PC-9 (cell line): ENCODE measurements at regions of chr5 and their contacts with region 1.

Region 1: DNA sequence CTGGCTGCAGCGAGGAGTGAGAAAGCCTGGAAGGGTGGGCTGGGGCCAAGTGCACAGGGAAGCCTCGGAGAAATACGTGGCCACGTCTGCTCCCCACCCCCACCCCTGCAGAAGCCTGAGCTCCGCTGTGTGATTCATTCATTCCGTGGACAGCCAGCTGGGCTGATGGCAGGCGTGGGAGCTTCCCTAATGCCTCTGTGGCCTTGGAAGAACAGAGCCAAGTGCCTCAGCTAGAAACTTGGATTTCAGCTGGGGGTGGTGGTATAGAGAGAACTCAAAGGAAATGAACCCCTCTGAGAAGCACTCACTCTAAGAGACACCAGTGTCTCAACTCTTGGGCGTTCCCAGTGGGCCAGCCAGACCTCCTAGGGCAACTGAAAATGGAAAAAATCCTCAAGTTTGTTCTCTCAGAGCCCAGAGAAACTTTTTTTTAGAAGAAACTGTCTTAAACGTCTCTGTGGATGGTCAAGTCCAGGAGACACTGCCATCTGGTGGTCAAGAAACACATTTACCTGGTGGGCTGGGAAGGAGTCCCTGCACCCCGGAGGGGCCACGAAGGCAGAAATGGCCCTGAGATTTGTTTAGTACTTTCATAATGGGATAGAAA is 18.0 kb downstream of the ATOX1 start:
- DNase-seq: peak; percentile 46 to 49
- H3K4me3 ChIP-seq: no peak overlapping the region
- H3K27ac ChIP-seq: no peak overlapping the region
- H3K4me1 ChIP-seq: peaks cover 32% of the 10 kb centered on the region
- H3K27me3 ChIP-seq: no peaks in the 10 kb centered on the region
- CTCF ChIP-seq: peak; percentile 92

Region 2: DNA sequence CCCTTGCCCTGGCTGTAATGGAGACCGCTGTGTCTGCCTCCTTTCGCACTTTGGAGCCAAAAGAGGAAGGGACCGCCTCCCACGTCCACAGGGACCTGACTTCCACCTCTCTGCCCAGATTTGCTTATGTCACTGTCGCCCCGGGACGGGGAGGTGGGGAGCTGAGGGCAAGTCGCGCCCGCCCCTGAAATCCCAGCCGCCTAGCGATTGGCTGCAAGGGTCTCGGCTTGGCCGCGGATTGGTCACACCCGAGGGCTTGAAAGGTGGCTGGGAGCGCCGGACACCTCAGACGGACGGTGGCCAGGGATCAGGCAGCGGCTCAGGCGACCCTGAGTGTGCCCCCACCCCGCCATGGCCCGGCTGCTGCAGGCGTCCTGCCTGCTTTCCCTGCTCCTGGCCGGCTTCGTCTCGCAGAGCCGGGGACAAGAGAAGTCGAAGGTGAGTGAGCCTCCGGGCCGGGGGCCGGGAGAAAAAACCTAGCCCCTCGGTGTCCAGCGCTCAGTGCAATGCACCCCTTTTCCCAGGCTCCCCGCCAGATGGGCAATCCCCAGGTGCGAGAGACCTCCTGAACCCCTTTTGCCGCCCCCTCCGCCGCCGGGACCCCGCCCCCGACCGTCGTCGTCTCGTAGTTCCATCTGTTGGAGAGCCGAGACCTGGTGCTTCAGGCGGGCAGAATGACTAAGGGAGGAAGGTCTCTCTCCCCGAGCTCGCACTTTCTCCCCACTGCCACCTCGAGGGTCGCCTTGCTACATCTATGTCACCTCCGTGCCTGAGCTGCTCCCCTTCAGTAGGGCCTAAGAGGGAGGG is 719.9 kb before region 1 on chr5 and contains the start of gene GPX3:
- CTCF ChIA-PET with region 1: no interaction called
- POLR2A ChIA-PET with region 1: no interaction called
- intact Hi-C with region 1: loop called (anchors 10 kb)
- DNase-seq: peak; percentile 78 to 93
- H3K4me3 ChIP-seq: peak within 1 kb of the TSS; percentile 94
- H3K27ac ChIP-seq: no peak within 1 kb of the TSS
- H3K4me1 ChIP-seq: peaks cover 12% of the 10 kb centered on the region
- H3K27me3 ChIP-seq: no peaks in the 10 kb centered on the region
- CTCF ChIP-seq: no peak
- total RNA-seq, gene GPX3: 84.6 and 93.2 TPM in 2 replicates

Region 3: GRCh38 chr5:151492729-151493128 is 247.7 kb before region 1 on chr5:
- CTCF ChIA-PET with region 1: no interaction called
- POLR2A ChIA-PET with region 1: no interaction called
- intact Hi-C with region 1: loop called (anchors 5 kb)
- DNase-seq: no peak
- H3K4me3 ChIP-seq: no peak overlapping the region
- H3K27ac ChIP-seq: no peak overlapping the region
- H3K4me1 ChIP-seq: no peaks in the 10 kb centered on the region
- H3K27me3 ChIP-seq: no peaks in the 10 kb centered on the region
- CTCF ChIP-seq: no peak

Region 4: DNA sequence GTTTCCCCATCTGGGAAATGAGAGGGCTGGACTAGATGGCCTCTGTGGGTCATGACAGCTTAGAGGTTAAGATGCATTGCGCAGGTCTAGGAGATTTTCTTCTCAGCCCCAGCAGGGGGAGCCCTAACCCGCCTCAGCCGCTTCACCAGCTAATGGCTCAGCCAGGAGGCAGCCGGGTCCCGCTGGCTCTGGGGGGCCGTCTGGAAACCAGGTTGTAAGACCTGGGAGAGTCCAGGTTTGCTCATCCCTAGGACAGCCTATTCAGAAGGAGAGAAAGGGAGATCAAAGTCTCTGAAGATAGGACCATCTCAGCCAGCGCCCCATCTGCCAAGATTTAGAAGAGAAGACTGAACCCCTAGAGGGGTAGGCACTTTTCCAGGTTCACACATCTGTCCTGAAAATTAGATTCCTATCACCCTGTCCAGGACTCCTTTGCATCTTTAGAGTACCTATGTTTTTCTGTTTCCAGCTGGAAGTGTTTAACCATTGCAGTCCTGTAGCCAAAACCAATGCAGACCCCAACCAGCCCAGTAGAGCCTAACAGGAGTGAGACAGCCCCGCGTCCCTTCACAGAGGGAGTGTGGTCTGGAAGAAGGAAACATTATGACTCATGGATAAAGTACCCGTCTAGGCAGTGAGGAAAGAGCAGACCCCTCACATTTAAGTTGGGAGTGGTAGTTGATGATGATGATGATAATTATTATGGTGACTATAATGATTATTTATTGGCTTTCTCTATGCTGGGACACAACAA is 81.3 kb before region 1 on chr5:
- CTCF ChIA-PET with region 1: interaction called, 23 read pairs
- POLR2A ChIA-PET with region 1: no interaction called
- intact Hi-C with region 1: loop called (anchors 1 kb)
- DNase-seq: peak; percentile 38 to 79
- H3K4me3 ChIP-seq: no peak overlapping the region
- H3K27ac ChIP-seq: no peak overlapping the region
- H3K4me1 ChIP-seq: no peaks in the 10 kb centered on the region
- H3K27me3 ChIP-seq: no peaks in the 10 kb centered on the region
- CTCF ChIP-seq: peak; percentile 93

Region 5: DNA sequence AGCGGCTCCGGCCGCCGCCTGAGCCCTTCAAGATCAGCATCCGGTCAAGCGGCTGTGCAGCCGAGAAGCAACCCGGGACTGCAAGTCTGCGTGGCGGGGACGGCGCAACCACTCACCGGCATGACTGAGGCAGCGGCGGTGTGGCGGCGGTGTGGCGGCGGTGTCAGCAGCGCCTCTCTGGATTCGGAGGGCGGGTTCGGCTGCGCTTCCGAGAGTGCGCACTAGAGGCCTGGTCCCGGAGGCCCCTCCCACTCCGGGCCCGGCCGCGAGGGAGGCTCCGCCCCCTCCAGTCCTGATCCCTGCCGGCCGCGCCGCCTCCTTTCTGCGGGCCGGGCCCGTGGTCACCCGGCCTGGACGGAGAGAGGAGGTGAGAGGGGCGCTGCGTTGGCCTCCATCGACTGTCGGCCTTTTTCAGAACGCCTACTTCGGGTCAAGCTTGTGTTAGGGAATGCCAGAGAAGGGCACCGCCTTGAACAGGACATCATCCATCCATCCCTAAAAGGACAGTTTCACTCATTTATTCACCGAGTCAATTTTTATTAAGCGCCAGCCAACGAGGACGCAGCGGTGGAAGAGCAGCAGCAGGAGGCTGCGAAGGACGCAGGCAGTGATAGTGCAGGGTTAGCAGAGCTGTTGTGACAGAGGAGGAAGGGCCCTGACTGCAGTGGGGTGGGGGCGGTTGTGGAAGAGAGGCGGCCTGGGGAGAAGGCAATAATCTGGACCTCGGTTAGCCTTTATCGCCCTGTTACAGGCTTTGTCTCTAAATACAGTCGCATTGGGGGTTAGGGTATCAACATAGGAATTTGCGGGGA is 18.2 kb after region 1 on chr5 and contains the start of gene ATOX1:
- CTCF ChIA-PET with region 1: no interaction called
- POLR2A ChIA-PET with region 1: interaction called, 5 read pairs
- intact Hi-C with region 1: loop called (anchors 1 kb)
- DNase-seq: peak; percentile 65 to 95
- H3K4me3 ChIP-seq: peak within 1 kb of the TSS; percentile 97
- H3K27ac ChIP-seq: 0 out of 2 replicates have a peak within 1 kb of the TSS, but pooled peaks have one; percentile 24
- H3K4me1 ChIP-seq: peaks cover 16% of the 10 kb centered on the region
- H3K27me3 ChIP-seq: no peaks in the 10 kb centered on the region
- CTCF ChIP-seq: no peak
- total RNA-seq, gene ATOX1: 175 and 201 TPM in 2 replicates

Region 6: GRCh38 chr5:151886546-151887275 is 146.3 kb after region 1 on chr5:
- CTCF ChIA-PET with region 1: no interaction called
- POLR2A ChIA-PET with region 1: no interaction called
- intact Hi-C with region 1: no loop called
- DNase-seq: no peak
- H3K4me3 ChIP-seq: no peak overlapping the region
- H3K27ac ChIP-seq: no peak overlapping the region
- H3K4me1 ChIP-seq: no peaks in the 10 kb centered on the region
- H3K27me3 ChIP-seq: no peaks in the 10 kb centered on the region
- CTCF ChIP-seq: no peak

Region 7: GRCh38 chr5:152560512-152561137 is 820.2 kb after region 1 on chr5:
- CTCF ChIA-PET with region 1: interaction called, 14 read pairs
- POLR2A ChIA-PET with region 1: no interaction called
- intact Hi-C with region 1: no loop called
- DNase-seq: peak in 1 of 2 experiments; percentile 31
- H3K4me3 ChIP-seq: no peak overlapping the region
- H3K27ac ChIP-seq: no peak overlapping the region
- H3K4me1 ChIP-seq: no peaks in the 10 kb centered on the region
- H3K27me3 ChIP-seq: no peaks in the 10 kb centered on the region
- CTCF ChIP-seq: peak; percentile 70